ENCODE measurements at regions of chr14 and their contacts with region 1.

Region 1: DNA sequence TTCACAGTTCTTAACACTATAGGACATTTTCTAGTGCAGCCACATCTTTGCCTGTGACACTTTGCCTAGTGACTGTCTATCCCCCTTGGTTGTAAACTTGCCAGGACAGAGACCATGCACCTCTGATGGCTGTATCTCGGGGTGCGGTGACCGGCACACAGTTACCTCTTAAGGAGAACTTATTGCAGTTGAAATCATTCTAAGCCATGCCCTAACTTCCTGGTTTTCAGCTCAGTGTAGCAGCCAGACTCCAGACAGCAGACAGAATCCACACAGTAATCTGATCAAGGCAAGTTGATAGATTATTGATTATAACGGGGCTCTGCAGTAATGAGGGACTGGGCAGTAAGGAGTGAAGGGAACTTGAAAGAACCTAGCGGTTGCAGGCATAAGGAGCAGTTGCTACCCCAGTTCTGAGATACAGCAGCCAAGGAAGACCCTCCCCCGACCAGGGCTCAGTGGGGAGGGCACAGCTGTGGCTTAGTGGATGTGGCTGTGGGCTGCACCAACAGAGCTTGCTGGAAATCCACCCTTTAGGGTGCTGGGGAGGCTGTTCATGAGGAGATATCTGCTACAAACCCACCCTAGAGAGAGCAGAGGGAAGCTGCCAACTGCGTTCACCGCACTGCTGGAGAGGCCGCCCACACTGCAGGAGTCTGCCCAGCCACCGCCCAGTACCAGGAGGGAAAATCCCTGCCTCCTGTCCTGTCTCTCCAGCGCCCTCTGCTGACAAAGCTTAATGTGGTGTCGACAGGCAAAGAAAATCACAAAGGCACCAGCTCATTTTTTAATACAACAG is 58.2 kb upstream of the BEGAIN start:
- DNase-seq: peak; percentile 89 to 96 (median 96)
- H3K4me3 ChIP-seq: peak overlapping the region in 4 of 7 experiments; percentile 20 to 43 (median 35)
- H3K27ac ChIP-seq: no peak overlapping the region
- H3K4me1 ChIP-seq: peaks cover 8 to 54% (median 37%) of the 10 kb centered on the region in 4 experiments
- H3K27me3 ChIP-seq: no peaks in the 10 kb centered on the region

Region 2: DNA sequence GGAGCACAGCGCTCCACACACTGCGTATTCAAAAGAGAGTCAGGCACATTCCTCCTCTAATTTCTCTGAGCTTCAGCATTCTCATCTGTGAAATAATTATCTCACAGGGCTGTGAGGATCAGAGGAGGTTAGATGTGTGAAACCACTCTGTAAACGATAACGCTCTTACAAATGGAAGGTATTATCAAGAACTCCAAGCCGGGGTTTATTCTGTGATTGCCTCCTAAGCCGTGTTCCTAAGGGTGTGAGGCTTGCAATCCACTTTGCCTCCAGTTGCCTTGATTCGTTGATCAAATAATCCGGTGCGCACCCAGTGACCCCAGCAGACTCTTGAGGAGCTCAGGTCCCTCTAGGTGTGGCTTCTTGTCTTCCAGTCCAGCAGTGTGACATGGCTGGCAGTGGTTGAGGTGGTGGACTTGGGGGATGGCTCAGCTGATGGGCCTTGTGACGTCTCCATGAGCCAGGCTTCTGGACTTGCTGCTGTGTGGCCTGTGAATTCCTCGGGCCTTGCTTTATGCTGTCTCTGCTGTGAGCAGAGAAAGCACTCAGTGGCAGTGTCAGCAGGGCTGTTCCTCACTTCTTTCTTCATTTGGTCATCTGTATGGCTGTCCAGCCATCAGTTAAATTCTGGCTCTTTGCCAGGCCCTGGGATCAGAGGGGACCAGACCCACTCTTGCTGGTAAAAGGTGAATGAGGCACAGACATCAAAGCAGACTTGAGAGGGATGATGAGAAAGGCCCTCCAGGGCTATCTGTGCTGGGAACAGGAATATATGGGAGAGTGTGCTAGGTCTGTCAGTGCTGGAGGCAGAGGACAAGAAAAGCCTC is 251.3 kb before region 1 on chr14:
- CTCF ChIA-PET with region 1: interaction called, 119 read pairs
- POLR2A ChIA-PET with region 1: no interaction called
- DNase-seq: no peak
- H3K4me3 ChIP-seq: no peak overlapping the region
- H3K27ac ChIP-seq: no peak overlapping the region
- H3K4me1 ChIP-seq: peaks cover 0 to 7% (median 4%) of the 10 kb centered on the region in 4 experiments
- H3K27me3 ChIP-seq: peaks cover 0 to under 1% (median 0%) of the 10 kb centered on the region in 5 experiments

Region 3: GRCh38 chr14:100524933-100525243 is 120.5 kb before region 1 on chr14:
- CTCF ChIA-PET with region 1: interaction called, 46 read pairs
- POLR2A ChIA-PET with region 1: no interaction called
- DNase-seq: peak in 2 of 3 donors; percentile 39 to 51
- H3K4me3 ChIP-seq: no peak overlapping the region
- H3K27ac ChIP-seq: no peak overlapping the region
- H3K4me1 ChIP-seq: peaks cover 0 to 6% (median 2%) of the 10 kb centered on the region in 4 experiments
- H3K27me3 ChIP-seq: no peaks in the 10 kb centered on the region

Region 4: GRCh38 chr14:100547633-100548294 is 97.6 kb before region 1 on chr14:
- CTCF ChIA-PET with region 1: interaction called, 17 read pairs
- POLR2A ChIA-PET with region 1: no interaction called
- DNase-seq: peak; percentile 93 to 98 (median 97)
- H3K4me3 ChIP-seq: peak overlapping the region in 5 of 7 experiments; percentile 8 to 77 (median 41)
- H3K27ac ChIP-seq: peak overlapping the region in 1 of 2 experiments; percentile 15
- H3K4me1 ChIP-seq: peaks cover 1 to 34% (median 29%) of the 10 kb centered on the region in 4 experiments
- H3K27me3 ChIP-seq: peaks cover 0 to 2% (median 0%) of the 10 kb centered on the region in 5 experiments

Region 5: GRCh38 chr14:100629696-100630095 is 15.7 kb before region 1 on chr14:
- CTCF ChIA-PET with region 1: interaction called, 24 read pairs
- POLR2A ChIA-PET with region 1: no interaction called
- DNase-seq: no peak
- H3K4me3 ChIP-seq: no peak overlapping the region
- H3K27ac ChIP-seq: no peak overlapping the region
- H3K4me1 ChIP-seq: peaks cover 0 to 4% (median 0%) of the 10 kb centered on the region in 4 experiments
- H3K27me3 ChIP-seq: no peaks in the 10 kb centered on the region

Region 6: GRCh38 chr14:100709289-100710284 is 64.2 kb after region 1 on chr14:
- CTCF ChIA-PET with region 1: no interaction called
- POLR2A ChIA-PET with region 1: no interaction called
- DNase-seq: peak; percentile 42 to 59 (median 48)
- H3K4me3 ChIP-seq: peak overlapping the region in 3 of 7 experiments; percentile 8 to 57 (median 26)
- H3K27ac ChIP-seq: no peak overlapping the region
- H3K4me1 ChIP-seq: peaks cover 2 to 64% (median 50%) of the 10 kb centered on the region in 4 experiments
- H3K27me3 ChIP-seq: no peaks in the 10 kb centered on the region

Region 7: DNA sequence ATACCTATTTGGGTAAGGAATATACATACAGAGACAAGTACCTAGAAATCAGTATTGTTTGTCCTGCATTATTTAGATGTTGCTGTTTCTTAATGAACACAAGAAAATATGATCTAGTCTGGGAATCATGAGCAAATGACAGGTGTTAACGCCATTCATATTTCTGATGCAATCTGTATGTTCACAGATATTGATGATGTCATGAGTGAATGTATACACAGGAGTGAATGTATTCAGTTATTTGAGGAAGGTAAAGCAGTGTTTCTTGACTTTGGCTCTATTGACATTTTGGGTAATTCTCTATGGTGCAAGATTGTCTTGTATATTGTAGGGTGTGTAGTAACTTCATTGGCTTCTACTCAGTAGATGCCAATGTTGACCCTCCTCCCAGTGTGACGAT is 284.9 kb after region 1 on chr14:
- CTCF ChIA-PET with region 1: no interaction called
- POLR2A ChIA-PET with region 1: no interaction called
- DNase-seq: no peak
- H3K4me3 ChIP-seq: no peak overlapping the region
- H3K27ac ChIP-seq: no peak overlapping the region
- H3K4me1 ChIP-seq: no peaks in the 10 kb centered on the region
- H3K27me3 ChIP-seq: no peaks in the 10 kb centered on the region